HCT116 (cell line): ENCODE measurements at regions of chr2 and their contacts with region 1.

Region 1: DNA sequence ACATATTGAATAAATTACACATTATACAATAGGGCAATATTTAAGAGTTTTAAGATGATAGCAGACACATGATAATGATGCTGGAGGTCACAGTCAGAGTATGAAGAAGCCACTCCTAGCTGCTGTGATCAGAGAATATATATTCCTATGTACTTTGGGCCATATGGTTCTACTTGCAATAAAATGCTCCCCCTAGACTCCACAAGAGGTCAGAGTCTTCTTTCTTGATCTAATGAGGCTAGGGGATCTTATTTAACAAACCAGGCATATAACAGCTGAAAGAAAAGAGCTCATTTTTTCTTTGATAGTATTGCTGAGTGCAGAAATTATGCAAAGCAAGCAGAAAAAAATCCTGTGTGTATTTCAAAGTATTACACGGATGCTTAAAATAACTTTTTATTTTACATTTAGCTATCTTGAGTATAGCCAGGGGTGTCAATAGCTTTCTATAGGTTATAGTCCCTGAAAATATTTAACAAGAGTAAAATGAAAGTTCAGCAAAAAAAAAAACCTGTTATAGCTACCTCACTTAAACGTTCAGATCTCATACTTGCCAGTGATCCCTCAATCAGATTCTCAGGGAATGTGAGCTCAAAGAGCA is 748.7 kb upstream of the CHAC2 start:
- DNase-seq: no peak
- ATAC-seq: no peak; the same call in 1 of the 2 replicates
- H3K4me3 ChIP-seq: no peak overlapping the region
- H3K27ac ChIP-seq: no peak overlapping the region
- H3K4me1 ChIP-seq: no peaks in the 10 kb centered on the region
- H3K27me3 ChIP-seq: no peaks in the 10 kb centered on the region
- CTCF ChIP-seq: peak; percentile 27 to 36 (median 33); a peak in 4 of 6 replicates
- POLR2A ChIP-seq: no peak
- RAD21 ChIP-seq: peak; percentile 51

Region 2: GRCh38 chr2:53114582-53114981 is 95.7 kb after region 1 on chr2:
- CTCF ChIA-PET with region 1: no interaction called
- POLR2A ChIA-PET with region 1: no interaction called
- RAD21 ChIA-PET with region 1: no interaction called
- intact Hi-C with region 1: no loop called
- DNase-seq: no peak
- ATAC-seq: no peak
- H3K4me3 ChIP-seq: no peak overlapping the region
- H3K27ac ChIP-seq: no peak overlapping the region
- H3K4me1 ChIP-seq: no peaks in the 10 kb centered on the region
- H3K27me3 ChIP-seq: no peaks in the 10 kb centered on the region
- CTCF ChIP-seq: no peak
- POLR2A ChIP-seq: no peak
- RAD21 ChIP-seq: no peak

Region 3: GRCh38 chr2:53202063-53202462 is 183.1 kb after region 1 on chr2:
- CTCF ChIA-PET with region 1: interaction called, 6 read pairs
- POLR2A ChIA-PET with region 1: no interaction called
- RAD21 ChIA-PET with region 1: no interaction called
- intact Hi-C with region 1: loop called (anchors 2 kb)
- DNase-seq: peak; percentile 54
- ATAC-seq: peak; percentile 90
- H3K4me3 ChIP-seq: no peak overlapping the region
- H3K27ac ChIP-seq: no peak overlapping the region
- H3K4me1 ChIP-seq: peaks cover 3% of the 10 kb centered on the region in 2 experiments; a peak in 2 of 4 replicates
- H3K27me3 ChIP-seq: no peaks in the 10 kb centered on the region
- CTCF ChIP-seq: peak; percentile 20 to 46 (median 41); a peak in 4 of 6 replicates
- POLR2A ChIP-seq: no peak
- RAD21 ChIP-seq: peak; percentile 80